ENCODE measurements at regions of chr9 and their contacts with region 1.

Region 1: DNA sequence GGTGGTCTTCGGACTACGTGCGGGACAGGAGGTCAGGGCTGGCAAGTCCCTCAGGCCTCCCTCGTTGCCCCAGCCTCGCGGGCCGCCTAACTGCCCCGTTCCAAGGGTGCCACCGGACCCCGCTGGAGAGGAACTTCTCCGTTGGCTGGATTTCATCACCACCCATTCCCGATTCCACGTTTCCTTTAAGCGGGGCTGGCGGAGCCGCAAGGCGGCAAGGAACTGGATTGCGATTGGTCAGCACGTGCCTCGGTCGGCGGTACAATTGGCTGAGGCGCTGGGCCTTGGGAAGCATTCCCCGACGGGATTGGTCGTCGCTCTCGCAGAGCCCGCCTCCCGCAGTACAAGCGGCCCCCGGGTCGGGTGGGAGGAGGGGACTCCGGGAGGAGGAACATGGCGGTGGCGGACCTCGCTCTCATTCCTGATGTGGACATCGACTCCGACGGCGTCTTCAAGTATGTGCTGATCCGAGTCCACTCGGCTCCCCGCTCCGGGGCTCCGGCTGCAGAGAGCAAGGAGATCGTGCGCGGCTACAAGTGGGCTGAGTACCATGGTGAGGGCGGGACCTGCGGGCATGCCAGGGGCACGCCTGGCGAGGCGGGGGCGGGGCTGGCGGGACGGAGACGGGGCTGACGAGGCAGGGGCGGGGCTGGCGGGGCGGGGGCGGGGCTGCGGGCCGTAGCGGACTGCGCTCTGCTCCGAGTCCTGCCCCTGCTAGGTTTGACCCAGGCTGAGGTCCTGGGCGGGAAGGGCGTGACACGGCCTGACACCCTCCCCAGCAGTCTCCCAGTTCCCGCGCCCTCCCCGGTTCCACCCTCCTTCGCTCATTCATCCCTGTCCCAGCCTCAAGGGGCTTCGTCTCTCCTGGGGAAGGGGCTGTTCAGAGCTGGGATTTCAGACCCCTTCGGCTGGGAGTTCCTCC is at the start of gene PHPT1:
- DNase-seq: peak; percentile 99
- H3K4me3 ChIP-seq: peak within 1 kb of the TSS; percentile 97
- H3K4me3 Mint-ChIP-seq: peak within 1 kb of the TSS; percentile 97
- H3K27ac Mint-ChIP-seq: peak within 1 kb of the TSS; percentile 87
- H3K4me1 ChIP-seq: peaks cover 8% of the 10 kb centered on the region; the same call in 1 of the 2 replicates
- H3K4me1 Mint-ChIP-seq: no peaks in the 10 kb centered on the region
- H3K27me3 ChIP-seq: no peaks in the 10 kb centered on the region
- H3K27me3 Mint-ChIP-seq: no peaks in the 10 kb centered on the region
- CTCF ChIP-seq: no peak
- total RNA-seq, gene PHPT1: 103 and 105 TPM in 2 replicates

Region 2: GRCh38 chr9:136807281-136808074 is 41.8 kb before region 1 on chr9 and contains the start of gene RABL6:
- CTCF ChIA-PET with region 1: interaction called, 4 read pairs
- POLR2A ChIA-PET with region 1: no interaction called
- intact Hi-C with region 1: loop called (anchors 5 kb)
- DNase-seq: peak; percentile 66 to 86
- H3K4me3 ChIP-seq: peak within 1 kb of the TSS; percentile 90
- H3K4me3 Mint-ChIP-seq: peak within 1 kb of the TSS; percentile 75
- H3K27ac Mint-ChIP-seq: peak within 1 kb of the TSS; percentile 78
- H3K4me1 ChIP-seq: peaks cover 18% of the 10 kb centered on the region; the same call in 1 of the 2 replicates
- H3K4me1 Mint-ChIP-seq: peaks cover 6% of the 10 kb centered on the region
- H3K27me3 ChIP-seq: no peaks in the 10 kb centered on the region
- H3K27me3 Mint-ChIP-seq: no peaks in the 10 kb centered on the region
- CTCF ChIP-seq: no peak
- total RNA-seq, gene RABL6: 134 and 138 TPM in 2 replicates

Region 3: DNA sequence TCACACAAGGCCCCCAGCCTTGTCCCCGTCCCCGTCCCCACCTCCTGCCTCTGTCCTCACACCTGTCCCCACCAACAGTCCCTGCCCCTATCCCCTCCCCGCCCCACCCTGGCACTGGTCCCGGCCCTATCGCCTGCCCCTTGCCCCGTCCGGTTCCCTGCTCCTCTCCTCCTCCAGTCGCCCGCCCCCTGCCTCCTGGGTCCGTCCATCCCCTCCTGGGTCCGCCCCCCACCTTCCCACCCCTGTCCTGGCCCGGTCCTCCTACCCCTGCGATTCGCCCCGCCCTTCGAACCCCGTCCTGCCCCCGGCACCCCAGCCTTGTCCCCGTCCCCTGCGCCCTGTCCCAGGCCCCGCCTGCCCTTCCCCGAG is 16.4 kb after region 1 on chr9:
- CTCF ChIA-PET with region 1: no interaction called
- POLR2A ChIA-PET with region 1: interaction called, 3 read pairs
- intact Hi-C with region 1: loop called (anchors 1 kb)
- DNase-seq: peak in 1 of 2 experiments; percentile 58
- H3K4me3 ChIP-seq: peak overlapping the region; percentile 60
- H3K4me3 Mint-ChIP-seq: peak overlapping the region; percentile 77
- H3K27ac Mint-ChIP-seq: peak overlapping the region; percentile 76
- H3K4me1 ChIP-seq: peaks cover 3% of the 10 kb centered on the region; the same call in 1 of the 2 replicates
- H3K4me1 Mint-ChIP-seq: no peaks in the 10 kb centered on the region
- H3K27me3 ChIP-seq: no peaks in the 10 kb centered on the region
- H3K27me3 Mint-ChIP-seq: no peaks in the 10 kb centered on the region
- CTCF ChIP-seq: no peak

Region 4: GRCh38 chr9:136944519-136945279 is 95.4 kb after region 1 on chr9 and contains the starts of genes C8G and FBXW5:
- CTCF ChIA-PET with region 1: no interaction called
- POLR2A ChIA-PET with region 1: no interaction called
- intact Hi-C with region 1: loop called (anchors 10 kb)
- DNase-seq: peak; percentile 93 to 97
- H3K4me3 ChIP-seq: peak within 1 kb of the TSS; percentile 59
- H3K4me3 Mint-ChIP-seq: peak within 1 kb of the TSS; percentile 71
- H3K27ac Mint-ChIP-seq: peak within 1 kb of the TSS; percentile 48
- H3K4me1 ChIP-seq: peaks cover 44% of the 10 kb centered on the region
- H3K4me1 Mint-ChIP-seq: no peaks in the 10 kb centered on the region
- H3K27me3 ChIP-seq: no peaks in the 10 kb centered on the region
- H3K27me3 Mint-ChIP-seq: no peaks in the 10 kb centered on the region
- CTCF ChIP-seq: peak; percentile 92 to 96
- total RNA-seq, gene C8G: 0.77 and 1.3 TPM in 2 replicates
- total RNA-seq, gene FBXW5: 66.8 and 76.1 TPM in 2 replicates